GM10248 (cell line): ENCODE measurements at regions of chr4 and their contacts with region 1.

Region 1: DNA sequence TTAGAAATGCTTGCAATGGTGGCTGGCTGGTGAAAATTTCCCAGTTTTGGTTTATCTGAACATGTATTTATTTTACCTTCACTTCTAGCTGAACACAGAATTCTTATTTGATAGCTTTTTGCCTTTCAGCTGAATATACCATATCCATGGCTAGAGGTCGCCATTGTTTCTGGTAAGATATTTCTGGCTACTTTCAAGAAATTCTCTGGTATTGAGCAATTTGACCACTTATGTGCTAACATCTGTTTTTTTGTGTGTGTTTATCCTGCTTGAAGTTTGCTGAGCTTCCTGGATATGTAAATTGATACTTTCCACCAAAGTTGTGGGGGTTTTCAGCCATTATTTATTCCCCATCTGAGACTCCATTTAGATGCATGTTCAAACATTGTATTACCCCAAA is 75.4 kb downstream of the FBXW7 start:
- DNase-seq: peak; percentile 34
- CTCF ChIP-seq: peak; percentile 38

Region 2: DNA sequence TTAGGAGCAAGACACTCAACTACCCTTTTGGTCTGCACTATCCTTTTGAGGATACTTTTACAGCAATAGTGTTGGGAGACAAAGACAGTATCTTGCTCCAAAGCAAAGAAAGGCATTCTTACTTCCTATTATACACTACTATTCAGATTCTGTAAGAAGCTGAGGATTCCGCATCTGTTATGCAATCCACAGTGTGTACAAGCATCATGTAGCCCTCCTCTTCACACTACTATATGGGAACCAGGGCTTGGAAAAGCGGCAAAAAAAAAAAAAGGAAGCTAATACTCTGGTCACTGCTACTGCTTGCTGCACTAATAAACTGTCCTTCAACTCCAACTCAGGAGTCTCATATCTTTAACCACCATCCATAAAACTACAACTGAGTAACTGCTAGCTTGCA is 16.3 kb after region 1 on chr4:
- CTCF ChIA-PET with region 1: interaction called, 10 read pairs
- POLR2A ChIA-PET with region 1: no interaction called
- DNase-seq: no peak
- CTCF ChIP-seq: no peak